ENCODE measurements at regions of chr5 and their contacts with region 1.

Region 1: GRCh38 chr5:143002459-143003328 is 232.5 kb downstream of the ARHGAP26 start:
- DNase-seq: peak; percentile 97
- H3K4me3 ChIP-seq: peak overlapping the region in 1 of 3 experiments; percentile 14
- H3K27ac ChIP-seq: peak overlapping the region; percentile 90
- H3K4me1 ChIP-seq: peaks cover 22% of the 10 kb centered on the region
- H3K27me3 ChIP-seq: no peaks in the 10 kb centered on the region
- CTCF ChIP-seq: peak; percentile 30 to 34
- POLR2A ChIP-seq: no peak

Region 2: DNA sequence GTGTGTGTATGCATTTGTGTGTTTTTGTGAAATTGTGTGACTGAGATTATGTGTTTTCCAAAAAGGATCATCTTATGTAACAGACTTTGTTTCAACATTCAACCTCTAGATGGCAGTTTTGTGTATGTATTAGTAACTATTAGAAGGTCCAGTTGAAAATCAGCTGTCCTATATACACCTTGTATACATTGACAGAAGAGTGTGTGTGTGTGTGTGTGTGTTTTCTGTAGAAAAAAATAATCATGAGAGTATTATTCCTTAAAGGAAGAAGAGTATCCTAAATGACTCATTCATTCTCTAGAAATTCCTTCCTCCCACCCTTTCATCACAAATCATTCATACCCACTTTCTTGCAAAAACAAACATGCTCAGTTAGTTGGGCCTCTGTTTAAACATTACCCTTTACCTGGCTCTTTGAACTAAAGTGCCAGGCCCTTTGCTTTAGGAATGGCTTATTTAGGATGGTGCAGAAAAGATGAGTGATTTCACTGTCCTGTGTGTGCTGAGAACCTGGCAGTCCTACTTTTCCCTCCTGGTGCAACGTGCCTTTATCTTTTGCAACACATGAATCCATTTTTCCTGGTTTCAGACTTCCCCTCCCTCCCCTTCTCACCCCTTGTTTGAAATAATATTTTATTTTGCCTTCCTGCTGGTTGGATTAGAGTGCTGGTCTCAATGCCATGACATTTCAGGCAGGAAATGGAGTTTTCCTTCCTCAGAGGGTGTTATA is 80.3 kb before region 1 on chr5:
- CTCF ChIA-PET with region 1: interaction called, 17 read pairs
- POLR2A ChIA-PET with region 1: no interaction called
- dilution Hi-C with region 1: no loop called
- intact Hi-C with region 1: loop called (anchors 1 kb)
- DNase-seq: peak; percentile 90
- H3K4me3 ChIP-seq: no peak overlapping the region
- H3K27ac ChIP-seq: peak overlapping the region; percentile 62
- H3K4me1 ChIP-seq: peaks cover 34% of the 10 kb centered on the region
- H3K27me3 ChIP-seq: no peaks in the 10 kb centered on the region
- CTCF ChIP-seq: peak in 1 of 2 donors; percentile 24
- POLR2A ChIP-seq: no peak

Region 3: GRCh38 chr5:142974409-142974808 is 28.3 kb before region 1 on chr5:
- CTCF ChIA-PET with region 1: interaction called, 10 read pairs
- POLR2A ChIA-PET with region 1: interaction called, 3 read pairs
- dilution Hi-C with region 1: no loop called
- intact Hi-C with region 1: no loop called
- DNase-seq: no peak
- H3K4me3 ChIP-seq: no peak overlapping the region
- H3K27ac ChIP-seq: no peak overlapping the region
- H3K4me1 ChIP-seq: peaks cover 29% of the 10 kb centered on the region
- H3K27me3 ChIP-seq: no peaks in the 10 kb centered on the region
- CTCF ChIP-seq: no peak
- POLR2A ChIP-seq: no peak

Region 4: GRCh38 chr5:143037071-143037470 is 34.4 kb after region 1 on chr5:
- CTCF ChIA-PET with region 1: interaction called, 4 read pairs
- POLR2A ChIA-PET with region 1: no interaction called
- dilution Hi-C with region 1: no loop called
- intact Hi-C with region 1: loop called (anchors 2 kb)
- DNase-seq: peak; percentile 88
- H3K4me3 ChIP-seq: no peak overlapping the region
- H3K27ac ChIP-seq: peak overlapping the region; percentile 3
- H3K4me1 ChIP-seq: peaks cover 22% of the 10 kb centered on the region
- H3K27me3 ChIP-seq: no peaks in the 10 kb centered on the region
- CTCF ChIP-seq: no peak
- POLR2A ChIP-seq: no peak

Region 5: GRCh38 chr5:143074414-143074996 is 71.8 kb after region 1 on chr5:
- CTCF ChIA-PET with region 1: no interaction called
- POLR2A ChIA-PET with region 1: no interaction called
- dilution Hi-C with region 1: no loop called
- intact Hi-C with region 1: no loop called
- DNase-seq: no peak
- H3K4me3 ChIP-seq: no peak overlapping the region
- H3K27ac ChIP-seq: no peak overlapping the region
- H3K4me1 ChIP-seq: no peaks in the 10 kb centered on the region
- H3K27me3 ChIP-seq: no peaks in the 10 kb centered on the region
- CTCF ChIP-seq: no peak
- POLR2A ChIP-seq: no peak

Region 6: DNA sequence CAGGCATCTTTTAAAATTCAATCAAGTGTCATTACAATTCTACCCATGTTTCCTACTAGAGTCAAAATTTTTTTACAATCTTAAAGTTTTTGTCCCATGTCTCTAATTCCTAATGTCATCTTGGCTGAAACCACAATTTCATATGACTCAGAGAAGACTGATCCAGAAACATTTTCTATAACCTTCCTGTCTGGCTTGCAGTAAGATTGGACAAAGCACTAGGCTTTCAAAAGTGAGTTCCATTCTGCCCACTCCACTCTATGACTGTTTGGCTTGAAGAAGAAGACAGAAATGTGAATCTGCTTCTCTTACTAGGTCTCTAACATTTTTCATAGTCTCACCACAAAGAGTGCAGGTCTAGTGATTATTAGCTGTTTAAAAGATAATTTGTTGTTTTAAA is 312.0 kb after region 1 on chr5:
- CTCF ChIA-PET with region 1: interaction called, 4 read pairs
- POLR2A ChIA-PET with region 1: no interaction called
- dilution Hi-C with region 1: no loop called
- intact Hi-C with region 1: loop called (anchors 1 kb)
- DNase-seq: peak; percentile 69
- H3K4me3 ChIP-seq: no peak overlapping the region
- H3K27ac ChIP-seq: peak overlapping the region; percentile 24
- H3K4me1 ChIP-seq: peaks cover 62% of the 10 kb centered on the region
- H3K27me3 ChIP-seq: no peaks in the 10 kb centered on the region
- CTCF ChIP-seq: no peak
- POLR2A ChIP-seq: no peak

Region 7: DNA sequence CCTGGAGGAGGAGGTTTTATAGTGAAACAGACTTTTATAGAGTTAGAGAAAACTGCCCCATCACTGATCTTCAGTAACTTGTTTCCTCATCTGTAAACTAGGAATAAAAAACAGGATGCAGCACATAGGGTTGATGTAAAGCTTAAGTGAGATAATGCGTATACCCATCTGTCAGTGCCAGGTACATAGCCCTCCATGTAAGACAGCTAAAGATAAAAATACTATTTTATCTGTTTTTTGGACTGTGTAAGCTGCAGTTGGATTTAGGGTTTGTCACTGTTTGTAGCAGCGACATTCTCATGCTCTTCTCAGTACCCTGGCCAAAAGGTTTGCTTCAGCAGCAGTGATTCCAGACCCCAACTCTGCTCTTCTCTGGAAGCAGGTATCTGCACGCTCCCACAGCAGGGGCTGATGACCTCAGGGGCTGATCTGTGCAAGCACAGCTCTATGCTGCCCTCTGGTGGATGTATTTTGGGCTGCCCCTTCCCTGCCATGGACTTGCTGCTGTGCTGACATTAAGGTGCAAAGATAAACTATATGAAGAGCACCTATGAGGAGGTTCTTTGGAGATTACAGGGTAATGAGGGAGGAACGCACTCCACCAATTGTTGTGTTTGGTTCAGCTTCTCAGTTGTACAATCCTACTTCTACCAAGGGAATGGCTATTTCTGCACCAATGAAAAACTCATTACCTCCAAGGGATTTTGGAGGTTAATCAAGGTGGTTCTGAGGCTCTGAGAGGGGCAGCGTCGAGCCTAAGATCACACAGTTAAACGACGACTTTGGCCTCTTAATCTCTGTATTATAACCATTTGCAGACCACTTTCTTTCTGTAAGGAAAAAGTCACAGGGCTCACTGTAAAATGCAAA is 822.4 kb after region 1 on chr5:
- CTCF ChIA-PET with region 1: interaction called, 17 read pairs
- POLR2A ChIA-PET with region 1: no interaction called
- dilution Hi-C with region 1: no loop called
- intact Hi-C with region 1: loop called (anchors 1 kb)
- DNase-seq: peak; percentile 83
- H3K4me3 ChIP-seq: no peak overlapping the region
- H3K27ac ChIP-seq: no peak overlapping the region
- H3K4me1 ChIP-seq: no peaks in the 10 kb centered on the region
- H3K27me3 ChIP-seq: peaks cover 0 to 2% of the 10 kb centered on the region in 2 experiments
- CTCF ChIP-seq: peak; percentile 84
- POLR2A ChIP-seq: no peak

Region 8: GRCh38 chr5:144191998-144192397 is 1189.3 kb after region 1 on chr5:
- CTCF ChIA-PET with region 1: interaction called, 7 read pairs
- POLR2A ChIA-PET with region 1: no interaction called
- dilution Hi-C with region 1: no loop called
- intact Hi-C with region 1: loop called (anchors 1 kb)
- DNase-seq: peak; percentile 88
- H3K4me3 ChIP-seq: no peak overlapping the region
- H3K27ac ChIP-seq: peak overlapping the region; percentile 88
- H3K4me1 ChIP-seq: peaks cover 44% of the 10 kb centered on the region
- H3K27me3 ChIP-seq: no peaks in the 10 kb centered on the region
- CTCF ChIP-seq: peak; percentile 43 to 60
- POLR2A ChIP-seq: no peak